ENCODE measurements at regions of chr7 and their contacts with region 1.

Region 1: DNA sequence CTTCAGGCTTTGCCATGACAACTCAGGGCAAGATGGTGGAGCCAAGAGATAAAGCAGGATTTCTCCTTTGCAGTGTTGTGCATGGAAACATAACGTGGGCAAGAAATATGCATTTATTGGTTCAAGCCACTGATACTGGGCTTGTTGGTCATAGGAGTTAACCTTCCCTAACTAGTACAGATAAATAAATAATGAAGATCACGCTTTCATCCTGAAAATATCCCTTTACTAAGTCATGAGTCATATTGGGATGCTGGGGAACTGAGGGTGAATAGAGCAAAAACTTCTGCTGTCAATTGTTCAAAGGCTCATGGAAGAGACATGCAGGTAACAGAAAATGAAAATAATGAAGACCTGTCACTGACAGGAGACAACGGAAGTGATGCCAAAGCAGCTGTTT is 55.5 kb downstream of the TES start:
- DNase-seq: no peak
- ATAC-seq: no peak
- H3K4me3 ChIP-seq: no peak overlapping the region
- H3K27ac ChIP-seq: no peak overlapping the region
- H3K4me1 ChIP-seq: peaks cover 0 to 13% (median 3%) of the 10 kb centered on the region in 12 donors
- H3K27me3 ChIP-seq: no peaks in the 10 kb centered on the region
- CTCF ChIP-seq: no peak
- POLR2A ChIP-seq: no peak

Region 2: GRCh38 chr7:116340943-116341907 is 75.3 kb after region 1 on chr7:
- intact Hi-C with region 1: loop called in 3 of 10 experiments (anchors 5 kb)
- DNase-seq: no peak
- ATAC-seq: peak in 3 of 4 donors; percentile 60 to 70 (median 65)
- H3K4me3 ChIP-seq: no peak overlapping the region
- H3K27ac ChIP-seq: peak overlapping the region in 5 of 12 donors; percentile 36 to 62 (median 48)
- H3K4me1 ChIP-seq: peaks cover 0 to 31% (median 16%) of the 10 kb centered on the region in 12 donors
- H3K27me3 ChIP-seq: no peaks in the 10 kb centered on the region
- CTCF ChIP-seq: peak in 7 of 12 donors; percentile 13 to 44 (median 33)
- POLR2A ChIP-seq: no peak

Measured in heart left ventricle (tissue), 16 donors.